ENCODE measurements at regions of chr6 and their contacts with region 1.

Region 1: DNA sequence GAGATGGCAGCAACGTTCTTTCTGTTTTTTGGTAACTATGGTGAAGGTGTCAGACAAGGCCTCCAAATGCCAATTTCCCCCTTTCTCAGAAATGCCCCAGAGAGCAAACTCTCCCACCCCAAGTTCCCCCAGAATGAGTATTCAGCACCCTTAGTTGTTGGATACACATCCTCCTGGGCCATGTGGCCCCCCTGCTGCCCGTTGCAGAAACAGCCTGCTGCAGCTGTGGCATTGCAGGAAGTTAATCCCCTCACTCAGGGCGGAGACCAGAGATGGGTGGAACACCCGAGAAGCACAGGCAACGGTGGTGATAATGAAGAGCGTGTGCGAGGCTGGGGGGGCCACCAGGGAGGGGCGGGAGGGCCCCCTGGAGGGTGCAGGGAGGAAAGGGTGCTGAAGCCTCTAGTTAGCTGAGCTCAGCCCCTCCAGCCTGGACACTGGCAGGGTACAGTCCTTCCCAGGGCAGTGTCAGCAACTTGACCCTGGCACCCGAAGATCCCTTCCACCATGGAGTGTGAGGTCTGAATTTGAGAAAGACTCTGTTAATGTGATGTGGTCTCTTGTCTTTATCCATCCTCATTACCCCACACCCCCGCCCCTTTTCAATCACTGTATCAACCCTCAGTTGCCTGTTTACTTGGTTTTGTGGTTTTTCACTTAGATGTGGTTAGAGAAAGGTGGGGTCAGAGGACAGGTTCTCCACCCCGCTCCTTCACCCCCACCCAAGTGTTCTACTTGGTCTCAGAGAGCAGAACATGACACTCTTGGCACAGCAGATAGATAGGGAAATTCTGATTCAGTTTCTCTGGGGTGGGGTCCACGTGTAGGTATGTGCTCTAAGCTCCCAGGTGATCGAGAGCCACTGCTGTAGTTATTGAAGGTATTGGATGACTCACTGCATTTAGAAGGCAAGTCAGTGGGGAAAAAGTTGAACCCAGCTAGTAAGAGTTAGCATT is 208.8 kb upstream of the SUPT3H start:
- DNase-seq: peak; percentile 89 to 93 (median 91)
- H3K4me3 ChIP-seq: peak overlapping the region in 1 of 2 donors; percentile 25
- H3K4me3 Mint-ChIP-seq: peak overlapping the region; percentile 70 to 94 (median 86)
- H3K27ac ChIP-seq: peak overlapping the region; percentile 17
- H3K27ac Mint-ChIP-seq: peak overlapping the region; percentile 92 to 98 (median 95)
- H3K4me1 ChIP-seq: peaks cover 66% of the 10 kb centered on the region
- H3K4me1 Mint-ChIP-seq: peaks cover 66 to 78% (median 73%) of the 10 kb centered on the region in 4 donors
- H3K27me3 ChIP-seq: no peaks in the 10 kb centered on the region
- H3K27me3 Mint-ChIP-seq: no peaks in the 10 kb centered on the region

Region 2: GRCh38 chr6:45495429-45496084 is 90.9 kb before region 1 on chr6:
- CTCF ChIA-PET with region 1: no interaction called
- POLR2A ChIA-PET with region 1: interaction called, 9 read pairs
- intact Hi-C with region 1: loop called (anchors 2 kb)
- DNase-seq: peak; percentile 47 to 69 (median 55)
- H3K4me3 ChIP-seq: no peak overlapping the region
- H3K4me3 Mint-ChIP-seq: peak overlapping the region in 7 of 8 donors; percentile 56 to 86 (median 72)
- H3K27ac ChIP-seq: no peak overlapping the region
- H3K27ac Mint-ChIP-seq: peak overlapping the region; percentile 53 to 93 (median 81)
- H3K4me1 ChIP-seq: peaks cover 46% of the 10 kb centered on the region
- H3K4me1 Mint-ChIP-seq: peaks cover 43 to 68% (median 59%) of the 10 kb centered on the region in 4 donors
- H3K27me3 ChIP-seq: no peaks in the 10 kb centered on the region
- H3K27me3 Mint-ChIP-seq: no peaks in the 10 kb centered on the region

Region 3: DNA sequence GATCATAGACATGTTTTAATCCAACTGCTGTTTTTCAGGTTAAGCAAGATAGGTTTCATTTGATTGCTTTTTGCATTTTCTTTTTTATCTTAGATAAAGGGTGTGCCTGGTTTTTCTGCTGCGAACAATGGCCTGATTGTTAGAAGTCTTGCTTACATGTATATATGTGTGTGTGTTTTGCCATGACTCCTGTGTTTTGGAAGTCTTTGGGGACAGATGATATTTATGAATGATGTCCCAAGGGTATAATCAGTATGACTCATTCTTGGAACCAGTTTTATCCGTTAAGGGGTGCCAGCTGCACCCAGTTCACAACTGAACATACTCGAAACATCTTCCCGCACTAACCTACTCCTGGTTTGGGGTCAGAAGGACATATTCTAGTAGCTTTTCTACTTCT is 21.3 kb after region 1 on chr6:
- CTCF ChIA-PET with region 1: interaction called, 4 read pairs
- POLR2A ChIA-PET with region 1: interaction called, 7 read pairs
- intact Hi-C with region 1: loop called (anchors 2 kb)
- DNase-seq: no peak
- H3K4me3 ChIP-seq: no peak overlapping the region
- H3K4me3 Mint-ChIP-seq: no peak overlapping the region
- H3K27ac ChIP-seq: no peak overlapping the region
- H3K27ac Mint-ChIP-seq: no peak overlapping the region
- H3K4me1 ChIP-seq: no peaks in the 10 kb centered on the region
- H3K4me1 Mint-ChIP-seq: peaks cover 6 to 23% (median 16%) of the 10 kb centered on the region in 4 donors
- H3K27me3 ChIP-seq: no peaks in the 10 kb centered on the region
- H3K27me3 Mint-ChIP-seq: no peaks in the 10 kb centered on the region

Region 4: GRCh38 chr6:45663551-45664221 is 77.2 kb after region 1 on chr6:
- CTCF ChIA-PET with region 1: interaction called, 3 read pairs
- POLR2A ChIA-PET with region 1: interaction called, 5 read pairs
- intact Hi-C with region 1: loop called (anchors 5 kb)
- DNase-seq: peak in 4 of 5 donors; percentile 36 to 49 (median 42)
- H3K4me3 ChIP-seq: no peak overlapping the region
- H3K4me3 Mint-ChIP-seq: peak overlapping the region; percentile 54 to 81 (median 74)
- H3K27ac ChIP-seq: no peak overlapping the region
- H3K27ac Mint-ChIP-seq: peak overlapping the region in 4 of 7 donors; percentile 8 to 57 (median 27)
- H3K4me1 ChIP-seq: peaks cover 30% of the 10 kb centered on the region
- H3K4me1 Mint-ChIP-seq: peaks cover 22 to 54% (median 36%) of the 10 kb centered on the region in 4 donors
- H3K27me3 ChIP-seq: no peaks in the 10 kb centered on the region
- H3K27me3 Mint-ChIP-seq: peaks cover 2 to 3% of the 10 kb centered on the region in 2 donors

Region 5: DNA sequence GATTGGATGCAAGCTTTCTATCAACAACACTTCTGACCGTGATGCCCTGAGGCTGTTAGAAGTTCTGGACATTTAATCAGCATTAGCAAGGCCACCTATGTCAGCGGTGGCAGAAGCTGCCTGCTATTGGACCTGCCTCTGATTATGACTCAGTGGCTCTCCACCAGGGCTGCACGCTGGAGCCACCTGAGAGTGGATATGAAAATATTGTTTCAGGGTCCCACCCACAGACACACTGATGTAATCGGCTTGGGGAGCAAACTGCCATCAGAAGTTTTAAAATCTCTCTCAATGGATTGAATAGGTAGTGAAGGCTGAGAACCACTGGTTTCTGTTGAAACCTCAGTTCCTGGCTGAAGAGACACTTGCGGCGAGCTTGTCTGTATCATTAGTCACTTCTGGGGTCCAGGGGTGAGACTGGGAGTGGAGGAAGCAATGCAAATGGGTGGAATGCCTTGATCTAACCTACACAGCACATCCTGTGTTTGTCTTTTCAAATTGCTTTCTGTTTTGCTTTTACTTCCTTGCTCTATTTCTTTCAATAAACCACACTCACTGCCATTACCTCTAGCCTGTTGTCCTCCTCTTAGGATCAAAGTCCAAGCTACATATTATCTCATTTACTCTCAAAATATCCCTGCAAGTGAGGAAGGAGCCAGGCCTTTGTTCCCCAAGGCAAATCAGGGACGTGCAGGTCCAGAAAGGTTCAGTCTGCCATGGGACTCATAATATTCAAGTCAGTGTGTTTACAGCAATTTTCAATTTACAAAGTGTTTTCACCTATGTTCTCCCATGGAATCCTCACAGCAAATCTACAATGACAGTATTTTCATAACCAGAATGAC is 425.0 kb after region 1 on chr6:
- CTCF ChIA-PET with region 1: no interaction called
- POLR2A ChIA-PET with region 1: no interaction called
- intact Hi-C with region 1: loop called (anchors 5 kb)
- DNase-seq: peak; percentile 72 to 92 (median 83)
- H3K4me3 ChIP-seq: peak overlapping the region; percentile 32 to 42
- H3K4me3 Mint-ChIP-seq: peak overlapping the region; percentile 67 to 99 (median 84)
- H3K27ac ChIP-seq: peak overlapping the region; percentile 71
- H3K27ac Mint-ChIP-seq: peak overlapping the region; percentile 95 to 98 (median 97)
- H3K4me1 ChIP-seq: peaks cover 56% of the 10 kb centered on the region
- H3K4me1 Mint-ChIP-seq: peaks cover 51 to 74% (median 62%) of the 10 kb centered on the region in 4 donors
- H3K27me3 ChIP-seq: no peaks in the 10 kb centered on the region
- H3K27me3 Mint-ChIP-seq: no peaks in the 10 kb centered on the region

Measured in CD4-positive, alpha-beta memory T cell (primary cell).